HCT116 (cell line): ENCODE measurements at regions of chr17 and their contacts with region 1.

Region 1: DNA sequence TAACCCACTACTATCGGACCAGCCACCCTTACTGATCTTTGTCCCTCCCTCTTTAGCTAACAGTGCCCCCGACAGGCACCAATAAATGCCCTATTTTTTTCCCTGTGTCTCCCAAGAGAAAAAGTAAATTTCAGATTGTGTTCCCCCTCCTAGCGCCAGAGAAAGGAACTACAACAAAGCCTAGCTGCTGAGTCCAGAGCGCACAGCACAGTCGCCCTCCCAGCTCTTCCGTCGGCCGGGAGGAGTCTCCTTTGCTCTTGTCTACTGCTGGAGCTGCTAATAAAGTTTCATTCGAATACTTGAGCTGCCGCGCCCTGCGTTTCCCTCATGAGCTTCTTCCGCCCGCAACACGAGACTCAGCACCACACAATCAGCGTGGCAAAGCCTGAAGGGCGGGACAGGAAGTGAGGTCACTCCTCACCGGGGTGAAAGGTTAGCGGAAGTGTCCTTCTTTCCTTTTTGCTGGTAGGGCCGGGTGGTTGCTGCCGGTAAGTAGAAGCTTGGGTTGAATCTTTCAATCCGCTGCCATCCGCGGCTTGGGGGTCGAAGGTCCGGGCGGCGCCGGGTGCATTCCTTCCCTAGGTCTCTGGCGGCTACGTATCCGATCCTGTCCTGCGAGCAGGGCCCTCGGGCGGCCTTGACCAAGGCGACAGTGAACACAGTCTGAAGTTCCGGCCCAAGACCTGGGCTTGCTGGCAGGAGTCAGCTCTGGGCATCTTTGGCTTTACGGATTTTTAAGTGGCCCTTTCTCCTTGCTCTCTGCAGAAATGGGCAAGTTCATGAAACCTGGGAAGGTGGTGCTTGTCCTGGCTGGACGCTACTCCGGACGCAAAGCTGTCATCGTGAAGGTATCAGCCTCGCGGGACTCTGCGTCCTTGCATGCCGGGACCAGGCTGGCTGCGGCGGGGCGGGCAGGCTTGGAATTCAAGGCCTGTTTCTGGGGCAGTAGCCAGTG is at the start of gene RPL27:
- DNase-seq: peak; percentile 100
- ATAC-seq: peak; percentile 90
- H3K4me3 ChIP-seq: peak within 1 kb of the TSS; percentile 97 to 99
- H3K27ac ChIP-seq: peak within 1 kb of the TSS; percentile 92
- H3K4me1 ChIP-seq: peaks cover 13 to 48% of the 10 kb centered on the region in 2 experiments
- H3K27me3 ChIP-seq: no peaks in the 10 kb centered on the region
- CTCF ChIP-seq: peak; percentile 77 to 96 (median 79)
- POLR2A ChIP-seq: peak; percentile 78
- RAD21 ChIP-seq: peak; percentile 84
- total RNA-seq, gene RPL27: 1,295 TPM

Region 2: GRCh38 chr17:42964161-42964932 is 33.9 kb before region 1 on chr17 and contains the start of gene AARSD1:
- CTCF ChIA-PET with region 1: interaction called, 8 read pairs
- POLR2A ChIA-PET with region 1: interaction called, 15 read pairs
- RAD21 ChIA-PET with region 1: interaction called in 1 of 2 experiments, 5 read pairs
- intact Hi-C with region 1: no loop called
- DNase-seq: peak; percentile 93
- ATAC-seq: peak; percentile 90
- H3K4me3 ChIP-seq: peak within 1 kb of the TSS; percentile 89 to 98
- H3K27ac ChIP-seq: peak within 1 kb of the TSS; percentile 80
- H3K4me1 ChIP-seq: peaks cover 8 to 23% of the 10 kb centered on the region in 2 experiments; a peak in 3 of 4 replicates
- H3K27me3 ChIP-seq: no peaks in the 10 kb centered on the region
- CTCF ChIP-seq: no peak
- POLR2A ChIP-seq: peak; percentile 76
- RAD21 ChIP-seq: no peak
- total RNA-seq, gene AARSD1: 65.9 TPM

Region 3: GRCh38 chr17:43079578-43080302 is 81.5 kb after region 1 on chr17:
- CTCF ChIA-PET with region 1: no interaction called
- POLR2A ChIA-PET with region 1: no interaction called
- RAD21 ChIA-PET with region 1: no interaction called
- intact Hi-C with region 1: no loop called
- DNase-seq: no peak
- ATAC-seq: no peak
- H3K4me3 ChIP-seq: no peak overlapping the region
- H3K27ac ChIP-seq: no peak overlapping the region
- H3K4me1 ChIP-seq: no peaks in the 10 kb centered on the region
- H3K27me3 ChIP-seq: no peaks in the 10 kb centered on the region
- CTCF ChIP-seq: no peak
- POLR2A ChIP-seq: no peak
- RAD21 ChIP-seq: no peak